ENCODE measurements at regions of chr3 and their contacts with region 1.

Region 1: GRCh38 chr3:186241910-186242821 is 119.9 kb downstream of the DGKG start:
- DNase-seq: peak; percentile 92

Region 2: GRCh38 chr3:185976977-185977678 is 265.0 kb before region 1 on chr3:
- in situ Hi-C with region 1: loop called (anchors 25 kb)
- DNase-seq: peak; percentile 61

Region 3: DNA sequence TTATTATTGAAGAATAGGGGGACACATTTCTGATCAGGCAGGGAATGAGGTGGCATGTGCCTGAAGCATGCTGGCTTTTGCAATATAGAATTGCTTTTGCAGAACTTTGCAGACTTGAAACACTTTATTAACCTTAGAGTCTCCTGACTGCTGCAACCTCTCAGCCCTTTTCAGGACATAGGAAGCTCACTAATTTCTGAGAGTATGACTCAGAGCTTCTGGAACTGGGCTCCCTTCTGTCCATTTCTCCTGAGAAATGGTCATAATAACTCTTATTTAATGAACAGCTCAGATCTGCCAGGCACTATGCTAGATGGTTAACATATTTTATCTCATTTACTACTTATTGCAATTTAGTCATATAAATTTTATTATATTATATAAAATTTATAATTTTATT is 158.5 kb after region 1 on chr3:
- in situ Hi-C with region 1: no loop called
- DNase-seq: no peak